ENCODE measurements at regions of chr7 and their contacts with region 1.

Region 1: GRCh38 chr7:70165477-70166170 is 567.3 kb downstream of the AUTS2 start:
- DNase-seq: no peak
- H3K4me3 ChIP-seq: no peak overlapping the region
- H3K27ac ChIP-seq: no peak overlapping the region
- H3K4me1 ChIP-seq: no peaks in the 10 kb centered on the region
- H3K27me3 ChIP-seq: no peaks in the 10 kb centered on the region
- CTCF ChIP-seq: no peak
- EP300 ChIP-seq: no peak
- RAD21 ChIP-seq: no peak

Region 2: DNA sequence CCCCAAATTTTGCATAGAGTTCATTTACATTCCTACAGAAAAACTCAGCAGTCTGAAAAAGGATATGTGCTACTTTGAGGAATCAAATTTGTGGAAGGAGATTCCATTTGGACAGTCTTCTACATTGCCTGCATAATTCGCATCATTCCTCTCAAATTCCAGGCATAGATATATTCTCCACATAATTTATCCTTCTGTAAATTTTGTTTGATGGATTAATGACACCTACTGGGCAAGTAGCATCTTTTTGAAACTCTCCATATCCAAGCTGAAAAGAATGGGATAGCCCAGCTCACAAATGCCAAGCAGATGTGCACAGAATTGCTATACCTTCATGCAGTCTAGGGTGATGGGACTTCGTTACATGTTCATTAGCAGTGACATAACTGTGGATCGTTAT is 52.1 kb before region 1 on chr7:
- CTCF ChIA-PET with region 1: interaction called, 10 read pairs
- POLR2A ChIA-PET with region 1: no interaction called
- DNase-seq: peak; percentile 54
- H3K4me3 ChIP-seq: no peak overlapping the region
- H3K27ac ChIP-seq: peak overlapping the region in 1 of 2 experiments; percentile 34; a peak in 1 of 4 replicates
- H3K4me1 ChIP-seq: peaks cover 0 to 8% of the 10 kb centered on the region in 2 experiments; a peak in 2 of 4 replicates
- H3K27me3 ChIP-seq: no peaks in the 10 kb centered on the region
- CTCF ChIP-seq: no peak
- EP300 ChIP-seq: peak; percentile 31 to 47; a peak in 2 of 4 replicates
- RAD21 ChIP-seq: no peak; the same call in 1 of the 2 replicates

Region 3: DNA sequence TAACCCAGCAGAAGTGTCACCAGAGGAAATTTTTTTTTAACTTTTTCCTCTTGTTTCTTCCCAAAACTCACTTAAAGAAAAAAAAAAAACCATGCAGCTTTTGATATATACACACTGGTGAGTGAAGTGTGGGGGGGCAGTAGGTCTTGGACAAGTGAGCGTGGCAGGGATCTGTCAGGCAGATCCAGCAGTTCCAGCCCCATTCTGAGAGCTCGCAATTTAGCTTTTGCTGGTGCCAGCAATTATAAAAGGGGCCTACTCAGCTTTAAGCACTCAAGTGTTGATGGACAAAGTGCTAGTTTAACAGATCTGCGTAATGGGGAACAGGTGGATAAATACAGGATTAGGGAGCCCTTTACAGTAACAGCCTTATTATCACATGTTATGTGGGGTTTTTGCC is 347.1 kb after region 1 on chr7:
- CTCF ChIA-PET with region 1: interaction called, 18 read pairs
- POLR2A ChIA-PET with region 1: no interaction called
- DNase-seq: no peak
- H3K4me3 ChIP-seq: no peak overlapping the region
- H3K27ac ChIP-seq: peak overlapping the region in 1 of 2 experiments; percentile 78; a peak in 2 of 4 replicates
- H3K4me1 ChIP-seq: peaks cover 0 to 3% of the 10 kb centered on the region in 2 experiments; a peak in 2 of 4 replicates
- H3K27me3 ChIP-seq: no peaks in the 10 kb centered on the region
- CTCF ChIP-seq: no peak
- EP300 ChIP-seq: no peak
- RAD21 ChIP-seq: no peak

Measured in SK-N-SH (cell line).